Cardiac septum (tissue), 1 donor: ENCODE measurements at regions of chr16 and their contacts with region 1.

Region 1: DNA sequence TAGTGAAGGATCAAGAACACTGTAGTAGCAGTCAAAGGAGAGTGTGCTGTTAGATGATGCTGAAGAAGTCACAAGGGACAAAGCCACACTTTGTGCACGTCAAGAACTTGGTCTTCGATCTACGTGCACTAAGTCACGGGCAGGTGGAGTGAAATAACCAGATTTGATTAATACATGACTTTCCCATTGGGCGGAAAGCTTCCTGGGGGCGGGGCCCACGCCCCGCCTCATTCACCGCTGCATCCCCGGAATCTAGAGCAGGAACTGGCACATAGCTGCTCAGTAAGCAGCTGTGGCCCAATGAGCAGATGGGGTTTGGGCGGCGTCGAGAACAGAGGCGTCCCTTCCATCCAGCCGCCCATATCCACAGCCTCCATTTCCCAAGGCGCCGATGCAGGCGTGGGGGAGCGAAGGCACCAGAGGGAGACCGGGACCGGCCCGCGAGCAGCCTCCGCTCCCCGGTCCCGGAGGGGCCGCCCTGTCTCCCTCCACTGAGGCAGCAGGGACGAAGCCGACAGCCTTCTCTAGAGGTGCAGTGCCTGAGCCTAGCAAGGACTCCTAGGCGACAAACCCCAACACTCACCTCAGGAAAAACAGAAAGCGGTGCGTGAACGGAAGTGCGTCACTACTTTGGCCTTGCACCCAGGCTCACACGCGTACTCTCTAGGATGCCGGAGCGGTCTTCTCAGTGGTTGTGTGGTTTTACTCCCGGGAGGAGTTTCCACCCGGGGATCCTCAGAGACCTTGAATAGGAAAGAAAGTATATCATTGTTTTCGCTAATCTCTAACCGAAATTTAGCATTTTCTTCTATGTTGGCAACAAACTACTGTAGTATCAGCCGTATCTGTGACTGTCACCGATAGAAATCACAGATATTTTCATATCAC is 4.9 kb downstream of the ZNF19 start:
- DNase-seq: peak; percentile 93

Region 2: GRCh38 chr16:71461686-71462648 is 22.3 kb before region 1 on chr16 and contains the start of gene ZNF23:
- intact Hi-C with region 1: loop called (anchors 1 kb)
- DNase-seq: peak; percentile 94
- total RNA-seq, gene ZNF23: 5.9 TPM

Region 3: GRCh38 chr16:71473891-71474290 is 10.4 kb before region 1 on chr16:
- intact Hi-C with region 1: no loop called
- DNase-seq: no peak